ENCODE measurements at regions of chr1 and their contacts with region 1.

Region 1: DNA sequence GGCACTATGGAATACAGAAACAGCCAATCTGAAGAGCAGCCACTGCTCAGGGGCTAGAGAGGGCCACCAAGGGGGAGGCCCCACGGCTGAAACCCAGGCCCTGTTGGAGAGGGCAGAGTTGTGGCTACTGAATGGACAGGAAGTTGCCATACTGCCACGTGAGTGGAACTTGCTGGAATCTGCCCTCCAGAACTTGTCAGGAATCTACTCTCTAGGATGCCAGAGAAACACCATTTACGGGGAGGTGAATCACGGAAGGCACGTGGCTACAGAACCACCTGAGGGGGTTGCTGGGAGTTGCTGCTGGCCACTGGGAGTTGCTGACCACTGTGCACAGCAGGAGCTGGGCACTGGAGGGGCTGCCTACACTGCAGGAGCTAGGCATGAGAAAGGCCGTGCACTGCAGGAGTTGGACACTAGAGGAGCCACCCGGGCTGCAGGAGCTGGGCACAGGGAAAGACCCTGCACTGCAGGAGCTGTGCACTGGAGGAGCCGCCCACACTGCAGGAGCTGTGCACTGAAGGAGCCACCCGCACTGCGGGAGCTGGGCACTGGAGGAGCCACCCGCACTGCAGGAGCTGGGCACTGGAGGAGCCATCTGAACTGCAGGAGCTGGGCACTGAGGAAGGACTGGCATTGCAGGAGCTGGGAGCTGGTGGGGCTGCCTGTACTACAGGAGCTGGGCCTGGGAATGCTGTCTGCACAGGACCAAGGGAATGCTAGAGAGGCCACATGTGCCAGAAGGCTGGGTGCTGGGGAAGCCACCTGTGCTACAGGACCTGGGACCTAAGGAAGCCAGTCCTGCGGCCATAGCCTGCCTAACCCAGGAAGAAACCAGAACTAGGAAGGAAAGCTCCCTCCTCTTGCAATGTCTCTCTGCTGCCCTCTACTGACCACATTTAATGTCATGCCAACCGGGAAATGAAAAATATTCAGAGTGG is 343.4 kb downstream of the MATN1 start:
- DNase-seq: peak; percentile 62
- H3K4me3 Mint-ChIP-seq: no peak overlapping the region
- H3K27ac Mint-ChIP-seq: no peak overlapping the region
- H3K4me1 Mint-ChIP-seq: no peaks in the 10 kb centered on the region
- H3K27me3 Mint-ChIP-seq: peaks cover 26% of the 10 kb centered on the region

Region 2: GRCh38 chr1:30348147-30348546 is 31.8 kb before region 1 on chr1:
- CTCF ChIA-PET with region 1: interaction called, 10 read pairs
- DNase-seq: no peak
- H3K4me3 Mint-ChIP-seq: no peak overlapping the region
- H3K27ac Mint-ChIP-seq: no peak overlapping the region
- H3K4me1 Mint-ChIP-seq: no peaks in the 10 kb centered on the region
- H3K27me3 Mint-ChIP-seq: peaks cover 12% of the 10 kb centered on the region

Region 3: DNA sequence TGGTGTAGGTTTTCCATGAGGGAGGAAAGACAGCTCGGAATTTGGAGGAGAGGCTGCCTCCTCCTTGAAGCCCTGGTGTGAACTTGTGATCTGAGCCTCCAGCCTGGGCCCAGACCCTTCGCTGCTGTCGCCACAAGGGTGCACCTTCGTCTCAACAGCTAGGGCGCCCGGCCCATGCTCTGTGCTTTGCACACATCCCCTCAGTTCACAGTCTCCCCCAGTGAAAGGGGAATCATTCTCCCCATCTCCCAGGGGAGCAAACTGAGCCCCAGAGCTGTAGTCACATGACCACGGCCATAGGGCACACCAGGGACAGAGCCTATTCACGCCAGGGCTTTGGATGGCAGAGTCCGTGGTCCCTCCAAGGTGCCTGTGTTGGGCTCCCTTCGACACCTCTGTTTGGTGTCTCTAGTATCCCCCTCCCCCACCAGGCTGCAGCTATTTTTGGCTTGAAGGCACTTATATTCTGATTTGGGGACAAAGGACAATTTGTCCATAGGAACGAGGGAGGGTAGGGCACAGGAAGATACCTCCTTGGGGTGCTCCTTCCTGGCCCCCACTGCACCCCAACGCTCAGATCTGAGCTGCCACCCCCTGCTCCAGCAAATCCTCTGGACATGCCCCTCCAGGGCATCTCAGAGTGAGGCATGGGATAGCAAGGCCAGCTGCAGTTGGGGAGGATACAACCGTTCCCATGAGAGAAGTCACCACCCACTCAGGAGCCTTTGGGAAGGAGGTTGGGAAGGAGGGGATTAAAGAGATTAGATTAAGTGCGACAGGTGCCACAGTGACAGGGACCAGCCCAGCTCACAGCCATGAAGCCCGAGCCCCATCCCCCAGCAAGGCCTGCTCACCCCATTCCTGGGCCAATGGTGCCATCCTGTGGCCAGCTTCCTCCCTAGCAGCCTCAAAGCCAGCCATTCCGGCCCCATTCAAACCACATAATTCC is 327.7 kb after region 1 on chr1:
- CTCF ChIA-PET with region 1: interaction called, 10 read pairs
- DNase-seq: peak; percentile 73
- H3K4me3 Mint-ChIP-seq: no peak overlapping the region
- H3K27ac Mint-ChIP-seq: no peak overlapping the region
- H3K4me1 Mint-ChIP-seq: no peaks in the 10 kb centered on the region
- H3K27me3 Mint-ChIP-seq: peaks cover 27% of the 10 kb centered on the region

Measured in activated naive CD4-positive, alpha-beta T cell treated with anti-CD3 and anti-CD28 coated beads, Interleukin-2, amount 10 ng/mL, durations not matched to agents 7 days and 5 days (primary cell).